ENCODE measurements at regions of chr11 and their contacts with region 1.

Region 1: GRCh38 chr11:8263769-8264410 is at the start of gene LMO1:
- DNase-seq: peak; percentile 87
- ATAC-seq: peak; percentile 79
- H3K4me3 Mint-ChIP-seq: peak within 1 kb of the TSS; percentile 35
- H3K27ac Mint-ChIP-seq: no peak within 1 kb of the TSS
- H3K4me1 Mint-ChIP-seq: peaks cover 9% of the 10 kb centered on the region
- H3K27me3 Mint-ChIP-seq: peaks cover 65% of the 10 kb centered on the region
- CTCF ChIP-seq: peak; percentile 79
- total RNA-seq, gene LMO1: not detected

Region 2: DNA sequence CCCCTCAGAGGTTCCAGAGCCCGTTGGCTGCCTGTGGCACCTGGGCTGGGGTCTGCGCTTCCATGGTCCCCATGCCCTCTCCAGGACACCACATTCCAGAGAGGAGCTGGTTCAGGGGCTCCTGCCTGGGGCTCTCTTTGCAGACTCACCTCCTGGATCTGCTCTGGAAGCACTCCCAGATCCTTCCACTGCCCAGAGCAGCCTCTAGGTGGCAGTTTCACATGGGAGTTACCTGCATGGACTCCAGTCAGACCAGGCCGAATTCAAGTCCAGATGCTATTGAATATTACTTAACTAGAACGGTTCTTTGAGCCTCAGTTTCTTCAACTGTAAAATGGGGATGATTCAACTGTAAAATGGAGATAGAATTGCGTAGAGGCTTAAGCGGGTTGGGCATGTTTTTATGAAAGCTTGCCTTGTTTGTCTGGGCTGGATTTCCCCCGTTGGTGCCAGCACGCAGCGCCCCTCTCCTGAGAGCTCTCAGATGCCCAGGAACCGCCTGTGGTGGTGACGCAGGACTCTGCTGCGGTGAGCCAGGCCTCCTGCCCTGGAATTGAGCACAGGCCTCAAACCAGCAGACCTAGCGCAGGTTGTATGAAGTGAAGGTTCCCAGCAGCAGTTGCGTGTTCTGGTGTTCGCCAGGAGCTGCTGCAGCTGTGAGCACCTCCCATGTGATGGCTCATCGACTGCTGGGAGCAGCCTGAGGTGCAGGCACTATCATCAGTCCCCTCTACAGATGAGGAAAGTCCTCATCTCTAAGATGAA is 44.5 kb before region 1 on chr11:
- CTCF ChIA-PET with region 1: interaction called, 18 read pairs
- POLR2A ChIA-PET with region 1: no interaction called
- intact Hi-C with region 1: no loop called
- DNase-seq: peak; percentile 38
- ATAC-seq: no peak
- H3K4me3 Mint-ChIP-seq: no peak overlapping the region
- H3K27ac Mint-ChIP-seq: no peak overlapping the region
- H3K4me1 Mint-ChIP-seq: no peaks in the 10 kb centered on the region
- H3K27me3 Mint-ChIP-seq: no peaks in the 10 kb centered on the region
- CTCF ChIP-seq: peak; percentile 36

Region 3: DNA sequence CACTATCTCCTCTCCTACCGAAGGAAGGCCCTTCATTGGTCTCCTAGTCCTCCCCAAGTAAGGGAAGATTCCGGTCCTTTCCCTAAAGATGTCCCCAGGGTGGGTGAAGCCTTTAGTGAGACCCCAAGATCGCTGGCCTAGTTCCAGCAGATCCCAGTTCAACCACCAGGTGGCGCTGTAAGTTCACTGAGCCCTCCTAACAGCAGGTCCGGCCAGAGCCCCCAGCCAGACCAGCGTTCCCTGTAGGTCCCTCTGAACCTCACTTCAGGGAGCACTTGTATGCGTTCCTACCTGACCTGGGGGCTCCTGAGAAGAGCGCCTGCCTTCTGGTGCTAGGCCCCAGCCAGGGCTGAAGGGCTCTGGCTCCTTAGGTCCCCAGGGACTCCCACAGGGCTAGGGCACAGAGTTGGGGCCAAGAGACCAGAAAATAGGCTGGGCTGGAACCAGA is 38.3 kb before region 1 on chr11:
- CTCF ChIA-PET with region 1: interaction called, 18 read pairs
- POLR2A ChIA-PET with region 1: no interaction called
- intact Hi-C with region 1: no loop called
- DNase-seq: peak; percentile 80
- ATAC-seq: peak; percentile 84
- H3K4me3 Mint-ChIP-seq: no peak overlapping the region
- H3K27ac Mint-ChIP-seq: no peak overlapping the region
- H3K4me1 Mint-ChIP-seq: no peaks in the 10 kb centered on the region
- H3K27me3 Mint-ChIP-seq: no peaks in the 10 kb centered on the region
- CTCF ChIP-seq: peak; percentile 79

Region 4: GRCh38 chr11:8247312-8247711 is 16.6 kb before region 1 on chr11:
- CTCF ChIA-PET with region 1: interaction called, 29 read pairs
- POLR2A ChIA-PET with region 1: no interaction called
- intact Hi-C with region 1: no loop called
- DNase-seq: peak; percentile 36
- ATAC-seq: peak; percentile 62
- H3K4me3 Mint-ChIP-seq: no peak overlapping the region
- H3K27ac Mint-ChIP-seq: no peak overlapping the region
- H3K4me1 Mint-ChIP-seq: no peaks in the 10 kb centered on the region
- H3K27me3 Mint-ChIP-seq: peaks cover 6% of the 10 kb centered on the region
- CTCF ChIP-seq: peak; percentile 55

Region 5: GRCh38 chr11:8252388-8252787 is 11.5 kb before region 1 on chr11:
- CTCF ChIA-PET with region 1: interaction called, 29 read pairs
- POLR2A ChIA-PET with region 1: no interaction called
- intact Hi-C with region 1: no loop called
- DNase-seq: no peak
- ATAC-seq: no peak
- H3K4me3 Mint-ChIP-seq: no peak overlapping the region
- H3K27ac Mint-ChIP-seq: no peak overlapping the region
- H3K4me1 Mint-ChIP-seq: no peaks in the 10 kb centered on the region
- H3K27me3 Mint-ChIP-seq: no peaks in the 10 kb centered on the region
- CTCF ChIP-seq: no peak

Region 6: DNA sequence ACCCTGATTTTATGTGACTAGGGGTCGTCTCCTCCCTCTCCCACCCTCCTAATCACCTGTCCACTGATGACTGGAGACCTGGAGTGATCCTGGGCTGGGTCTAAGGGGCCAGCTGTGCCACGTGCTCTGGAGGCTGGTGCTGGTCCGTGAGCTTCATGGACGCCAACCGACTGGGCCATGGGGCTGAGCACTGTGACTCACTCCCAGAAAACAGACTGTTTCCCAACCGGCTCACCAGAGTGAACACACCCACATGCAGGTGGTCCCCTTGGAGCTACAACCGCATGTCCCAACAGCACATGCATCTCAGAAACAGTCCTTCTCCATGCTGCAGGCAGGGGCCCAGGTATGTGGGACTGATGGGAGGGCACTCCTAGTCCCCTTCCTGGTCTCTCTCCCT is 13.8 kb after region 1 on chr11:
- CTCF ChIA-PET with region 1: interaction called, 33 read pairs
- POLR2A ChIA-PET with region 1: no interaction called
- intact Hi-C with region 1: no loop called
- DNase-seq: no peak
- ATAC-seq: no peak
- H3K4me3 Mint-ChIP-seq: no peak overlapping the region
- H3K27ac Mint-ChIP-seq: no peak overlapping the region
- H3K4me1 Mint-ChIP-seq: no peaks in the 10 kb centered on the region
- H3K27me3 Mint-ChIP-seq: peaks cover 3% of the 10 kb centered on the region
- CTCF ChIP-seq: no peak

Region 7: GRCh38 chr11:8566613-8567210 is 302.8 kb after region 1 on chr11:
- CTCF ChIA-PET with region 1: interaction called, 16 read pairs
- POLR2A ChIA-PET with region 1: no interaction called
- intact Hi-C with region 1: no loop called
- DNase-seq: no peak
- ATAC-seq: peak; percentile 39
- H3K4me3 Mint-ChIP-seq: no peak overlapping the region
- H3K27ac Mint-ChIP-seq: no peak overlapping the region
- H3K4me1 Mint-ChIP-seq: peaks cover 8% of the 10 kb centered on the region
- H3K27me3 Mint-ChIP-seq: peaks cover 12% of the 10 kb centered on the region
- CTCF ChIP-seq: peak; percentile 69

Measured in activated CD8-positive, alpha-beta T cell treated with anti-CD3 and anti-CD28 coated beads for 36 hours (primary cell).